PC-3 (cell line): ENCODE measurements at regions of chr2 and their contacts with region 1.

Region 1: DNA sequence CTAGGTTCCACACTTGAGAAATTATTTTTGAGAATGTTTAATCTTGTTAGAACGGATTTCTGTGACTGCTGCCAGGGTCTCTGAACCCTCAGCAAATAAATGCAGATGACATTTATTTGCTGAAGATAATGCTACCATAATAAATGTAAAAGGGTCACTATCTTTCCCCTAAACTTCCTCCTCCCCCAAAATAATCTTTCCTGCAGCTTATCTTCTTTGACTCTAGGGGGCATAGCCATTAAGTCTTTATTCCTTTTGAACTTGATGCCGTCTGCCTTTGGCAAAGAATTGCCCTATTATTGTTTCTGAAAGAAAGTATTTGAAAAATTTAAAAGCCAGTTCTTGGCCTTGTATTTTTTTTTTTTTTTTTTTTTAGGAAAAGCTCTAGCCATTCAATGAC is 63.6 kb upstream of the ACSL3 start:
- DNase-seq: peak; percentile 40
- ATAC-seq: 0 out of 2 replicates have a peak, but pooled peaks have one; percentile 11
- H3K4me3 ChIP-seq: peak overlapping the region; percentile 20; the same call in 1 of the 2 replicates
- H3K27ac ChIP-seq: peak overlapping the region; percentile 93
- H3K4me1 ChIP-seq: peaks cover 26% of the 10 kb centered on the region
- H3K27me3 ChIP-seq: no peaks in the 10 kb centered on the region
- CTCF ChIP-seq: peak; percentile 65

Region 2: GRCh38 chr2:222690564-222691200 is 106.6 kb before region 1 on chr2:
- CTCF ChIA-PET with region 1: interaction called, 3 read pairs
- POLR2A ChIA-PET with region 1: no interaction called
- intact Hi-C with region 1: loop called (anchors 5 kb)
- DNase-seq: peak; percentile 86
- ATAC-seq: peak; percentile 87
- H3K4me3 ChIP-seq: peak overlapping the region; percentile 54; the same call in 1 of the 2 replicates
- H3K27ac ChIP-seq: no peak overlapping the region
- H3K4me1 ChIP-seq: no peaks in the 10 kb centered on the region; the same call in 1 of the 2 replicates
- H3K27me3 ChIP-seq: no peaks in the 10 kb centered on the region
- CTCF ChIP-seq: peak; percentile 100

Region 3: GRCh38 chr2:222707689-222708525 is 89.4 kb before region 1 on chr2:
- CTCF ChIA-PET with region 1: interaction called, 7 read pairs
- POLR2A ChIA-PET with region 1: no interaction called
- intact Hi-C with region 1: loop called (anchors 1 kb)
- DNase-seq: peak; percentile 80
- ATAC-seq: peak; percentile 68
- H3K4me3 ChIP-seq: no peak overlapping the region
- H3K27ac ChIP-seq: peak overlapping the region; percentile 43
- H3K4me1 ChIP-seq: peaks cover 22% of the 10 kb centered on the region; the same call in 1 of the 2 replicates
- H3K27me3 ChIP-seq: no peaks in the 10 kb centered on the region
- CTCF ChIP-seq: peak; percentile 88

Region 4: DNA sequence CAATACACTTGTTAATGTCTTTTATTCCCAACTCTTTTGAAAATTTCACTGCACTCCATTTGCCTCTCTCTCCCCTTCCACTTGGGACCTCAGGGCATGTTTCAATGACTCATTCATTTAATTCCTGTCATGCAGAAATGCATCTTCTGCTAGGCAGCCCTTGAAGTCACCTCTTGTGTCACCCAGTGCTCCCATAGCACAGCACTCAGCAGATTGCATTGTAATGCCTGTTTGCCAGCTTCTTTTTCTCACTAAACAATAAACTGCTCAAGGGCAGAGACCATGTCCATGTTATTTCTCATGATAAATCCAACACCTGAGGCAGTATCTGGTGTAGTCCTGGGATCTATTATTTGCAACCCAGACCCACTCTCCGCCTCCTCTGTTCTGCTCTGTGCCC is 22.3 kb before region 1 on chr2:
- CTCF ChIA-PET with region 1: no interaction called
- POLR2A ChIA-PET with region 1: no interaction called
- intact Hi-C with region 1: no loop called
- DNase-seq: peak; percentile 78
- ATAC-seq: peak; percentile 91
- H3K4me3 ChIP-seq: no peak overlapping the region
- H3K27ac ChIP-seq: no peak overlapping the region
- H3K4me1 ChIP-seq: peaks cover 5% of the 10 kb centered on the region; the same call in 1 of the 2 replicates
- H3K27me3 ChIP-seq: no peaks in the 10 kb centered on the region
- CTCF ChIP-seq: no peak

Region 5: GRCh38 chr2:222844323-222844722 is 47.1 kb after region 1 on chr2:
- CTCF ChIA-PET with region 1: interaction called, 7 read pairs
- POLR2A ChIA-PET with region 1: interaction called, 3 read pairs
- intact Hi-C with region 1: loop called (anchors 1 kb)
- DNase-seq: peak; percentile 95
- ATAC-seq: peak; percentile 67
- H3K4me3 ChIP-seq: peak overlapping the region; percentile 52
- H3K27ac ChIP-seq: peak overlapping the region; percentile 90
- H3K4me1 ChIP-seq: peaks cover 68% of the 10 kb centered on the region
- H3K27me3 ChIP-seq: no peaks in the 10 kb centered on the region
- CTCF ChIP-seq: no peak

Region 6: DNA sequence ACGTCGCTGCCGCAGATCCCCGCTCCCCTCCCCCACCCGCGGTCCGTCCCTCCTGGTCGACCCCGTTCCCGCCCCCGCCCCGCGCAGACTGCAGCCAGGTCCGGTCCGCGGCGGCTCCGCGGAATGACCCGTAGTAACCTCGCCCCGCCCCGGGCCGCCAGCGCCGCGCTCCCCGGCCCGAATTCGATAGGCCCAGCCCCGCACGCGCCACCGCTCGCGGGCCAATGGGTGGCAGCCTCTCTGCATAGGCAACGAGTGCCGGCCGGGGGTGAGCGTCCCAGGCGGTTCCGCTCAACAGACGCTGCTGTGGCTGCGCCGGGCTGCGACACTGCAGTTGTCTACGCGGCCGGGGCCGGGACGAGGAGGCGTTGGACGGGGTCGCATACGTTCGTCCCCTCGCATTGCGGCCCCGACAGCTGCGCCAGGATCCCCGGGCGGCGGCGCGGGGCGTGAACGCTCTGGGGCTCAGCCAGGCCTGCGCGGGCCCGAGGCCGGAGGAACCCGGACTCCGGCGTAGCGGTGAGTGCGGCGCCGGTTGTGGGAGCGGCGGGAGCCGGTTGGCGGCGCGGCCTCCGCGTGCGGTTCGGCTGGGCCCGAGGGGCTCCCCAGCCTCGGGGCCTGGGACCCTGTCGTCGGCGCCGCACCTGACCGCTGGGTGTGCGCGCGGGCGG is 63.6 kb after region 1 on chr2 and contains the start of gene ACSL3:
- CTCF ChIA-PET with region 1: interaction called, 13 read pairs
- POLR2A ChIA-PET with region 1: interaction called, 4 read pairs
- intact Hi-C with region 1: loop called (anchors 1 kb)
- DNase-seq: peak; percentile 95
- ATAC-seq: peak; percentile 90
- H3K4me3 ChIP-seq: peak within 1 kb of the TSS; percentile 76
- H3K27ac ChIP-seq: peak within 1 kb of the TSS; percentile 97
- H3K4me1 ChIP-seq: peaks cover 39% of the 10 kb centered on the region
- H3K27me3 ChIP-seq: no peaks in the 10 kb centered on the region
- CTCF ChIP-seq: no peak
- total RNA-seq, gene ACSL3: 216 and 236 TPM in 2 replicates

Region 7: DNA sequence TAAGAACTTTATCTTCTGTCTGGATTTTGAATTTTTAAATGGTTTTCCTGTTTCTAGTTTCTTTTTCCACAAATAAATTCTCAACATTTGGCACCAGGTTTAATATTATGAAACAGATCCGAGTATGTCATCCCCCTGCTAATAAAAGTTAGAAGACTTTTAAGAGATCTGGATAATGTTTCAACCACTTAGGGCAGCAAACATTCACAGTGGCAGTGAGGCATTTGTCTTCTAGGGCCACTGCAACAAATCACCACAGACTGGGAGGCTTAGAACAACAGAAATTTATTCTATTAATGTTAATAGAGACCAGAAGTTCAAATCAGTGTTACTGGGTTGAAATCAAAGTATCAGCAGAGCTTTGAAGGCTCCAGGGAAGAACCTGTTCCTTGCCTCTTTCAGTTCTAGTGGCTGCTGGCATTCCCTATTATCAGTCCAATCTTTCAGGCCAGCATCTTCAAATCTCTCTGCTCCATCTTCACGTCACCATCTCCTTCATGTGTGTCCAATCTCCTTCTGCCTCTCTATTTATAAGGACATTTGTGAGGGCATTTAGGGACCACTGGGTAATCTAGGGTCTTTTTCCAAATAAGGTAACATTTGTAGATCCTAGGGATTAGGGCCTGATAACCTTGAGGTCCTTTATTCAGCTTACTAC is 87.0 kb after region 1 on chr2:
- CTCF ChIA-PET with region 1: interaction called, 4 read pairs
- POLR2A ChIA-PET with region 1: no interaction called
- intact Hi-C with region 1: loop called (anchors 5 kb)
- DNase-seq: peak; percentile 38
- ATAC-seq: peak; percentile 39
- H3K4me3 ChIP-seq: 0 out of 2 replicates have a peak overlapping the region, but pooled peaks have one; percentile 17
- H3K27ac ChIP-seq: no peak overlapping the region
- H3K4me1 ChIP-seq: peaks cover 61% of the 10 kb centered on the region
- H3K27me3 ChIP-seq: no peaks in the 10 kb centered on the region
- CTCF ChIP-seq: no peak

Region 8: GRCh38 chr2:222903234-222904220 is 106.3 kb after region 1 on chr2:
- CTCF ChIA-PET with region 1: interaction called, 7 read pairs
- POLR2A ChIA-PET with region 1: no interaction called
- intact Hi-C with region 1: loop called (anchors 1 kb)
- DNase-seq: peak; percentile 64
- ATAC-seq: peak; percentile 58
- H3K4me3 ChIP-seq: no peak overlapping the region
- H3K27ac ChIP-seq: no peak overlapping the region
- H3K4me1 ChIP-seq: peaks cover 30% of the 10 kb centered on the region
- H3K27me3 ChIP-seq: no peaks in the 10 kb centered on the region
- CTCF ChIP-seq: peak; percentile 78